ENCODE measurements at regions of chr3 and their contacts with region 1.

Region 1: GRCh38 chr3:146640955-146641867 is 36.1 kb upstream of the PLSCR5 start:
- DNase-seq: peak; percentile 42
- H3K4me3 ChIP-seq: no peak overlapping the region
- H3K27ac ChIP-seq: no peak overlapping the region
- H3K4me1 ChIP-seq: no peaks in the 10 kb centered on the region
- CTCF ChIP-seq: peak; percentile 83

Region 2: GRCh38 chr3:144875211-144875610 is 1766.0 kb before region 1 on chr3:
- CTCF ChIA-PET with region 1: no interaction called
- POLR2A ChIA-PET with region 1: no interaction called
- intact Hi-C with region 1: no loop called
- DNase-seq: no peak
- H3K4me3 ChIP-seq: no peak overlapping the region
- H3K27ac ChIP-seq: no peak overlapping the region
- H3K4me1 ChIP-seq: no peaks in the 10 kb centered on the region
- CTCF ChIP-seq: no peak

Region 3: GRCh38 chr3:146065573-146066006 is 575.6 kb before region 1 on chr3:
- CTCF ChIA-PET with region 1: no interaction called
- POLR2A ChIA-PET with region 1: no interaction called
- intact Hi-C with region 1: loop called (anchors 5 kb)
- DNase-seq: peak; percentile 44
- H3K4me3 ChIP-seq: no peak overlapping the region
- H3K27ac ChIP-seq: no peak overlapping the region
- H3K4me1 ChIP-seq: no peaks in the 10 kb centered on the region
- CTCF ChIP-seq: peak; percentile 95

Region 4: GRCh38 chr3:146218880-146219866 is 422.0 kb before region 1 on chr3:
- CTCF ChIA-PET with region 1: no interaction called
- POLR2A ChIA-PET with region 1: no interaction called
- intact Hi-C with region 1: loop called (anchors 2 kb)
- DNase-seq: peak; percentile 40
- H3K4me3 ChIP-seq: no peak overlapping the region
- H3K27ac ChIP-seq: no peak overlapping the region
- H3K4me1 ChIP-seq: no peaks in the 10 kb centered on the region
- CTCF ChIP-seq: peak; percentile 92

Region 5: DNA sequence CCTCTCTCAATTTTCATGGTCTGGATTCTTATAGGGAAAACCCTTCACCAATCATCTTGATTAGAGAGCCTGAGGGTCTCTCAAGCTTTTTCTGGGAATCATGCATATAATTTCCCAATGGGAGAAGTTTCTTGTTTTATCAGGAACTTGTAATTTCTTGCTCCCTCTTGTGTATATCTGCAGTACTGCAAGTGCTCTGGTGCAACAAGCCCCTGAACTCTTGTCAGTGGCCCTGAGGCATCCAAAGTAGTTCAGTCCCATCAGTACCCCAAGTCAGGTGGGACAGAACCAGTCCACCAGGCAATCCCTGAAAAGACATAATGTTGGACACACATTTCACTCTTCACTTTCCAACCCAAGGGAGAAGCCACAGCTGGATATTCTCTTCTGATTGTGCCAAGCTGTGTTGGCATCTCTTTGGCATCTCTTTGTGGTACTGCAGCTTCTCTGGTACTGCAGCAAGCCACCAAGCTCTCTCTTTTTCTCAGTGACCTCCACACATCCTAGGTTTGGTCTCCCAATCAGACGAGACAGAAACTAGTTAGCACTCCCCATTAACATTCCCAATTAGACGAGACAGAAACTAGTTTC is 550.7 kb after region 1 on chr3:
- CTCF ChIA-PET with region 1: no interaction called
- POLR2A ChIA-PET with region 1: no interaction called
- intact Hi-C with region 1: loop called (anchors 10 kb)
- DNase-seq: peak; percentile 36
- H3K4me3 ChIP-seq: no peak overlapping the region
- H3K27ac ChIP-seq: no peak overlapping the region
- H3K4me1 ChIP-seq: no peaks in the 10 kb centered on the region
- CTCF ChIP-seq: peak; percentile 84